Activated T-helper 2 cell treated with anti-CD3 and anti-CD28 coated beads, Interferon-gamma antibody, Interleukin-2, Interleukin-4, amounts not matched to agents 10 μg/mL and 5 μg/mL and 100 μg/mL, durations not matched to agents 14 hours and 24 hours and 36 hours (primary cell): ENCODE measurements at regions of chr5 and their contacts with region 1.

Region 1: GRCh38 chr5:65172486-65173129 is 309.1 kb downstream of the ADAMTS6 start:
- DNase-seq: no peak
- H3K4me3 Mint-ChIP-seq: no peak overlapping the region
- H3K27ac Mint-ChIP-seq: no peak overlapping the region
- H3K4me1 Mint-ChIP-seq: peaks cover 3% of the 10 kb centered on the region
- H3K27me3 Mint-ChIP-seq: peaks cover 27% of the 10 kb centered on the region

Region 2: DNA sequence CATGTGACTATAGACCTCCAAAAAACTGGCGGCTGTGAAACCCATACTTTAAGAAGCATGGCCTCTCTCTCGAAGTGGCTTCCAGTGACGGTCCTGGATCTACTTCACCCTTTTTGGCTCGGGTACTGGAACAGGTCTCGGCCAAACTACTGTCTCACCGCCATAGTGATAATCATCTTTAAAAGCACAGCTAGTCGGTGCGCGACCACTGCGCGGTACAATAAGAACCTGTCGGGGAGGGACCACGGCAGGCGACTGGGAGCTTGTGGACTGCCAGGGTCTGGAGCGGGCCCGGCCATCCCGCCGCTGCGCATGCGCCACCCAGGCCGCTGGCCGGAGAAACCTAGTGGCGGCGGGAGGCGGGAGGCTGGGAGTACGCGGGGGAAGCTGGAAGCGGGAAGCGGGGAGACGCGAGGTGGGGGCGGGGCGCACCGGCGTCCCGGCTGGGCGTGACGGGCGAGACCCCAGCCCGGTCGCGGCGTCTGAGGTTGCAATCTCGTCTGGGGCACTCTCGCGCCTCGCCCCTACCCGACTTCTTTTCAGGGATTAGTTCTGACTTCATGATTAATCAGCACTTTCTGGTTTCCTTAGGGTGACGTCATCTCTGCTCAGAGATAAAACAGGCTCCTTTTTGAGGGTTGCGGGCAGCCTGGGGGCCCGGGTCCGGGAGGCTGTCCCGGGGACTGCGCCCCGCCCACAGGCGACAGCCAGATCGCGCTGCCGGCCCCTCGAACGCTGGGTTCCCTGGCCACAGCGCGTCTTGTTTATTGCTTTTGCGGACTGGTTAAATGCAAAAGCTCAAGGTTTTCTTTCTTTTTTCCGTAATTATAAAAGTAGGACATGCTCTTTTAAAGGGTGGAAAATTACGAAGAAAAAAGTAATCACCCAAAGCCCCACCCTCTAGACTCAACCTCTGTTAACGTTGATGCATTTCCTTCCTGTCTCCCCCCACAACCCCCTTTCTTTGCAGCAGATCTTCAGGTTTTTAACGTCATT is 137.1 kb before region 1 on chr5:
- intact Hi-C with region 1: loop called (anchors 5 kb)
- DNase-seq: peak; percentile 79
- H3K4me3 Mint-ChIP-seq: peak overlapping the region; percentile 78
- H3K27ac Mint-ChIP-seq: peak overlapping the region; percentile 83
- H3K4me1 Mint-ChIP-seq: peaks cover 34% of the 10 kb centered on the region
- H3K27me3 Mint-ChIP-seq: no peaks in the 10 kb centered on the region

Region 3: DNA sequence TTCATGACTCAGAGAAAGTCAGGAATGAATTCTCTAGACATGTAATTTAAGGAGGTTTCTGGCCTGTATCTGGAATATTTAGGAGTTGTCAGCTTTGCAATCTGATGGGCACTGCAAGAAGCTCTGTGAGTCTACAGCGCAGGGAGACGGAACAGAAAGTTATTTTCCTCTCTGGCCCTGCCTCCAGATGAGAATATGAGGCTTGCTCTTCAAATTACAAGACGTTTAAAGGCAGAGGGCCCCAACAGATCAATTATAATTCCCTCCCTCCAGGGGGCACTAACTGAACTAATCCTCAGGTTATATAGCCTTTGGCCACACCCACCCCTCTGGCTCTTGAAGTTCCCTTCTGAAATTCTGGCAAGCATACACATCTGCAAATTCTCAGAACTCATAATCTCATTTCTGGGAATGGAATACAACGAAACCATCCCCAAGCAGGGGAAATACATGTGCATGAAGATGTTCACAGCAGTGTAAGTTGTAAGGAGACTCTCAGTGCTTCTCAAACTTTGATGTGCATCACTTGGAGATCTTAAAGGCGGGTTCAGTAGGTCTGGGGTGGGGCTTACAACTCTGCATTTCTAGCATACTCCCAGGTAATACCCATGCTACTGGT is 96.2 kb before region 1 on chr5:
- intact Hi-C with region 1: loop called (anchors 5 kb)
- DNase-seq: peak; percentile 55
- H3K4me3 Mint-ChIP-seq: no peak overlapping the region
- H3K27ac Mint-ChIP-seq: no peak overlapping the region
- H3K4me1 Mint-ChIP-seq: peaks cover 13% of the 10 kb centered on the region
- H3K27me3 Mint-ChIP-seq: peaks cover 26% of the 10 kb centered on the region

Region 4: GRCh38 chr5:65102828-65103711 is 69.5 kb before region 1 on chr5:
- intact Hi-C with region 1: loop called (anchors 5 kb)
- DNase-seq: peak; percentile 21
- H3K4me3 Mint-ChIP-seq: peak overlapping the region; percentile 80
- H3K27ac Mint-ChIP-seq: peak overlapping the region; percentile 73
- H3K4me1 Mint-ChIP-seq: peaks cover 35% of the 10 kb centered on the region
- H3K27me3 Mint-ChIP-seq: peaks cover 21% of the 10 kb centered on the region

Region 5: DNA sequence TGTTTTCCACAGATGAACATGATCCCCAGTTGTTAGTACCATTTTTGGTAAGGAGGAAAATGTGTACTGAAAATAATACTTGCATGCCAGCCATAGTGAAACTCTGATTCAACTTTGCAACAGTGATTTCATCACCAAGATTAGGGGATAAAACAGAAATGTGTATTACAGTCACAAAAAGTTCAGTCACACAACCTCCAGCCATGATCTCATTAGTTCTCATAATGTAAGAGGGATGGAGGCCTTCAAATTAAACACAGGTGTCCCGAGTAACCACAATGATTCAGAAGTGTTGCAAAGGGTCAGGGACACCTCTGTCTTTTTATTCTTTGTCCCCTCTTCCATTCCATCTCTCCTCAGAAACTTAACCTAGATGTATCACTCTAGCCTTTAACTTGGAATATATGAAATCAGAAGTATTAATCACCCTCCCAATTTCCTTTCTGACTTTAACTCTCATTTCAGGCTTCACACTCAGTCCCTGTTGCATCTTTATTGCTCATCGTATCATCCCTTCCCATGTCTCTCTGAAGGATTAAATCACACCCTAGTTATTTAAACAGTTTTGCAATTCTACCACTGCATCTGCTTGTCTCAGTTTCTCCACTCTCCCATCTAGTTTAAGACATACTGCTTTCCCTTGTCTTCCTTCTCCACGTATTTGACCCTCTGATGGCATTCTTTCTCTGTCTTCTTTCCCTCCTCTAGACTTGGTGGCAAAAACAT is 17.9 kb after region 1 on chr5:
- intact Hi-C with region 1: loop called (anchors 1 kb)
- DNase-seq: no peak
- H3K4me3 Mint-ChIP-seq: no peak overlapping the region
- H3K27ac Mint-ChIP-seq: peak overlapping the region; percentile 23
- H3K4me1 Mint-ChIP-seq: peaks cover 8% of the 10 kb centered on the region
- H3K27me3 Mint-ChIP-seq: peaks cover 10% of the 10 kb centered on the region

Region 6: GRCh38 chr5:65341835-65342234 is 169.2 kb after region 1 on chr5:
- intact Hi-C with region 1: no loop called
- DNase-seq: no peak
- H3K4me3 Mint-ChIP-seq: no peak overlapping the region
- H3K27ac Mint-ChIP-seq: no peak overlapping the region
- H3K4me1 Mint-ChIP-seq: no peaks in the 10 kb centered on the region
- H3K27me3 Mint-ChIP-seq: no peaks in the 10 kb centered on the region